Right ventricle myocardium inferior (tissue), 1 donor: ENCODE measurements at regions of chr6 and their contacts with region 1.

Region 1: DNA sequence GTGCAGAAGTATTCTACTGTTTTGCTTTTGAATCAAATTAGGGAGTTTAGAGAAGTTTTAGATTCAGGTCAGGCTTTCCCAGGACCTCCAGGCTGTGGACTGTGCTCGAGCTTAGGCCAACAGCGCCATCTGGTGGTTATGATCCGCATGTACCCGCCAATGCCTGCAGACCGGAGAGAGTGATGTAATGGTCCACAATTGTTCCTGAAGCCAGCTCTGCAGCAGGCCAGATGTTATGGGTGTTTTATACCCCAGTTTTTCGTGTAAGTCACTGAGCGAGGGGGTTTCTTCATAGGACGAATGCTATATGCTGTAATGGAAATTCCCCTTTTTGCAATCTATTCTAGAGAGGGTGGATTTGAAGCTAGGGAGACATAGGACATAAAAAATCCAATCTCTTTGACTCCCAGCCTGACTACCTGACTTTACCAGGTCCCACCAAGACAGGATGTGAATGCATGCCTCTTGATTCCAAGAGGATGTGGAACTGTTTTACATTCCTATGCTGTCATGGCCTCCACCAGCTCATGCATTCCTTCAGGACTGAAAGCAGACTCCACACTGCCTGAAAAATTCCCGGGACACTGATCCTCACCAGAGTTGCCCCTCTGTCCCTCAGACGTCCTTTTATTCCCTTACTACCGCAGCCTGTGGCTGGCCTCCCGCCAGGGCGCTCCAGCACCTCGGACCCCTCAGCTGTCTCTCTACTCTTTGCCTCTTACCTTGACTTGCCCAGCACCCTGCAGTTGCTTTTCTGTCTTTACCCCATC is 41.2 kb upstream of the LY86 start:
- DNase-seq: peak; percentile 86
- ATAC-seq: peak; percentile 97

Region 2: DNA sequence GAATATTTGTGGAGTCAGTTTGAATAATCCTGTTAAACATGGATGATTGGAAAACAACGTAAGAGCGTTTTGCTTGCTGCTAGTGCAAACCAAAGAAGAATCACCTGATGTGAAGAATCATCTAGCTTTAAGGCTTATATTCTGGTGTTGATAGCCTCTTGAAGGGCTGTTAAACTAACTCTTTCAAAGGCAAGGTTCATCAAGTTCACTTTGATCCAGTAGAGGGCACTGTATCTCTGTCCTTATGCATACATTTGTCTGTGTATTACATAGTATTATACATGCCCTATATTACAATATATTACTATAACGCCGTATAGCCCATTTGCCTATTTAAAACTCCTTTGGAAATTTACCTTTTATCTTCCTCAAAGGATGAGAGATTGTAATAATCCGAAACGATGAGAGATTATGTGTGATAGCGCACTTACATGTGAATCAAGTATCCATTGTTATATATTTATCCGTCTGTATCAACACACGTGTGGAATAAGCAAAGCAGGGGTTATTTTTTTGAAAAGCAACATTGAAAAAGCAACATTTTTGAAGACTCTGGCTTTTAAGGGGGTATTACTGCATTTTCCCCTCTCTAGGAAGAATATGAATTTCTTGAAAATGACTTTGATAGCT is 489.8 kb before region 1 on chr6:
- intact Hi-C with region 1: loop called (anchors 1 kb)
- DNase-seq: no peak
- ATAC-seq: peak; percentile 48

Region 3: DNA sequence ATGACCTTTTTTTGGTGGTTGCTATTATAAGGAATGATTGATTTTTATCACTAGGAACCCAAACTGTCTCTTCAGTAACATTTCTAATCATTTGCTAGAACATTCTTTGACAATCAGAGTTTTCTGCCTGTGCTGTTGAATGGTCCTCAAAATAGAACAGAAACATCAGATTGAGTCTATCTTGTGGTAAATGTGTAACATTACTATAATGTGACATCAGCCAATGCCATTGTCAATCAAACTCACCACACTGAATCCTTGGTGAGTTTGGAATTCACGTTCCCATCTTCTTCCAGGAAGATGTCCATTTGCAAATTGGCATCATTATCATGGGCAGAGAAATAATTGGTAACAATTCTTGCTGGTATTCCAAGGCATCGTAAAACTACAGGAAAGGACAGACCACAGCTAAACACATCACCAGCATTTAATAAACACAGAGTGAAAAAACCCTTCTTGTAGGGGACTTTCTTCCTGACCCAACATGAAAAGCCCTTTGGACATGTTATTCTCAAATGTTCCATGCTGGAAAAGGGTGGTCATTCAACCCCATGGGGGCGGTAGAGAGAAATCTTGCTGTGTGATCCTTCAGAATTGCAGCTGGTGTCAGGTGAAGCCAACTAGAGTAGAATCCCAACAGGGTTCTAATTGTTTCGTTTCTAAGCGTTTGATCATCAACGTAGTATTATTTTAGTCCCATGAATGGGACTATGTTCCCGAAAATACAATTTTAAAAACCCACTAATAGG is 325.3 kb before region 1 on chr6:
- intact Hi-C with region 1: loop called (anchors 5 kb)
- DNase-seq: no peak
- ATAC-seq: no peak